ENCODE measurements at regions of chr13 and their contacts with region 1.

Region 1: GRCh38 chr13:29850224-29850898 is at the start of gene UBL3:
- DNase-seq: peak; percentile 93
- H3K4me3 ChIP-seq: peak within 1 kb of the TSS; percentile 86
- H3K27ac ChIP-seq: peak within 1 kb of the TSS; percentile 24
- H3K4me1 ChIP-seq: peaks cover 16% of the 10 kb centered on the region
- CTCF ChIP-seq: no peak
- total RNA-seq, gene UBL3: 5.6 and 6.7 TPM in 2 replicates

Region 2: DNA sequence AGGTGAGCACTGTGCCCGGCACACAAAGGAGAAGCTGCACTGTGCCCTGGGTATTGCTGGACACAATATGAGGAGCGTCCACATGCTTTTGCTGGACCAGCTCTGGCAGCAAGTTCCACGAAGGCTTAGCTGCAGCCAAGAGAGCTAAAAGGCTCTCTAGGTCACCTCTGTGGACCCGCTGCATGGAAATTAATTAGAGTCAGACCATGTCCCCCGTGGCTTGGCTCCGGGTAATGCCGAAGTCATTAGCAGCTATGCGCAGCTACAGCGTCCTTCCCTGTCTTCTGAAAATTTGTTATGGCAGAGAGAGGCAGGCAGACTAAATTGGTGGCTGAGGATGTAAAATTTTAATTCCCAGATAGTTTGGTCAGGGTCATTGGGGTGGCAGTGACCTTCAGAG is 526.4 kb before region 1 on chr13:
- CTCF ChIA-PET with region 1: no interaction called
- POLR2A ChIA-PET with region 1: no interaction called
- intact Hi-C with region 1: no loop called
- DNase-seq: no peak
- H3K4me3 ChIP-seq: no peak overlapping the region
- H3K27ac ChIP-seq: no peak overlapping the region
- H3K4me1 ChIP-seq: no peaks in the 10 kb centered on the region
- CTCF ChIP-seq: no peak

Region 3: DNA sequence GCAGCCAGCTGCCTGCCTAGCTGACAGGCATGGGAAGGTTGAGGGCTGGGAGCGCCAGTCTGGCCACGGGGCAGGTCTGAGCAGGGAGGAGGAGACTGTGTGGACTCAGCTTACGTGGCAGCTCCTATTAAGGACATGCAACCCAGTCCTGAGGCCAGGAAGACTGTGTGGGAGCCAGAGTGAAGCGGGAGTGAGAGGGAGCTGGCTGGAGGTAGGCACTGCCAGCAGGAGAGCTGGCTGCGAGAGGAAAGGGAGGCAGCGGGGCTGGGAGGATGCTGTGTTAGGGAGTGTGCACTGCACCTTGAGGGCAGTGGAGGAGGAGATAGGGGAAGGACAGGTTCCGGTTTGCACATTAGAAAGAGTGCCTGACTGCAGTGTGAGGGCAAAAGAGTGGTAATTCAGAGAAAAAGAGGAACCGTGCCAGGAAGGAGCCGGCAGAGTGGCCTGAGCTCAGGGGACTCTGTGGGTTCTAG is 354.1 kb before region 1 on chr13:
- CTCF ChIA-PET with region 1: no interaction called
- POLR2A ChIA-PET with region 1: no interaction called
- intact Hi-C with region 1: loop called (anchors 10 kb)
- DNase-seq: peak; percentile 69
- H3K4me3 ChIP-seq: peak overlapping the region; percentile 2
- H3K27ac ChIP-seq: no peak overlapping the region
- H3K4me1 ChIP-seq: peaks cover 33% of the 10 kb centered on the region
- CTCF ChIP-seq: no peak

Region 4: GRCh38 chr13:29595380-29596063 is 254.8 kb before region 1 on chr13 and contains the start of gene SLC7A1:
- CTCF ChIA-PET with region 1: no interaction called
- POLR2A ChIA-PET with region 1: no interaction called
- intact Hi-C with region 1: loop called (anchors 1 kb)
- DNase-seq: peak; percentile 94
- H3K4me3 ChIP-seq: peak within 1 kb of the TSS; percentile 99
- H3K27ac ChIP-seq: peak within 1 kb of the TSS; percentile 77
- H3K4me1 ChIP-seq: peaks cover 37% of the 10 kb centered on the region
- CTCF ChIP-seq: no peak
- total RNA-seq, gene SLC7A1: 32.3 and 39.5 TPM in 2 replicates

Region 5: GRCh38 chr13:30334663-30335386 is 484.5 kb after region 1 on chr13:
- CTCF ChIA-PET with region 1: no interaction called
- POLR2A ChIA-PET with region 1: no interaction called
- intact Hi-C with region 1: no loop called
- DNase-seq: peak; percentile 60
- H3K4me3 ChIP-seq: peak overlapping the region; percentile 58
- H3K27ac ChIP-seq: peak overlapping the region; percentile 98
- H3K4me1 ChIP-seq: peaks cover 80% of the 10 kb centered on the region
- CTCF ChIP-seq: peak; percentile 85

Measured in OCI-LY7 (cell line).